Esophagus muscularis mucosa (tissue), 4 donors: ENCODE measurements at regions of chr1 and their contacts with region 1.

Region 1: DNA sequence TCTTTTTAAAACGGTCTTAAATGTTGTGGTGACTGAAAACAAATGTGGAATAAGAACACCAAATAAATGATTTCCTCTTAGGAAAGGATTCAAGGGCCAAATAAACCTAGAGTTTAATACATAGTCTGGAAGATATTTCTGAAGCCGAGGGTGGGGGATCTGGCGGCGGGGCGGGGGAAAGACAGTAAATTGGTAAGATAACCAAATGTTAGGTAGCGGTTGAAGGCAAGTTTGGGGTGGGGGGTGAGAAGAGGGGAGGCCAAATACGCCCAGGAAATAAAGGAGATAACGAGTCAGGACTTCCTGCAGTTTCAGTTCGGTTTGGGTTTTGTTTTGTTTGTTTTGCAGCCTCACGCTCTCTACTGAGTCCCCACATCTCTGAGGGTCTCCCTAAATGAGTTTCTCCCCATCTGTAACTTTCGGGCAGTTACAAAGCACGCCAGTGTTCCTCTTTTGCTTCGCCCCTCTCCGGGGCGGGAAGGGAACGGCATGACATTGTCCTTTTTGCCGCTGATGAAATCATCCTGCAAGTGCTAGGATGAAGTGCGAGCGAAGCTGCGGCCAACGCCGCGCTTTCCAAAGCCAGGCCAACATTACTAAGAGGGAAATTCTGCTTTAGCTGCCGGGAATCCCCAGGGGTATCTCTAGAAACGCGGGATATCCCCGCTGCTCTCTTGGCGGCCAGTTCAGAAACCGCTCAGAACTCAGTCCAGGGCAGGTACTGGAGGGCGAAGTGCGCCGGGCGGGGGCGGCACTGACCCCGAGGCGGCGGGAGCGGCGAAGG is 844 bp downstream of the NIBAN1 start:
- DNase-seq: no peak
- H3K4me3 ChIP-seq: peak overlapping the region; percentile 73 to 97 (median 93)
- H3K27ac ChIP-seq: peak overlapping the region; percentile 89 to 96 (median 95)
- H3K4me1 ChIP-seq: peaks cover 13 to 44% (median 44%) of the 10 kb centered on the region in 4 donors
- H3K27me3 ChIP-seq: no peaks in the 10 kb centered on the region
- CTCF ChIP-seq: no peak
- EP300 ChIP-seq: no peak
- POLR2A ChIP-seq: no peak

Region 2: DNA sequence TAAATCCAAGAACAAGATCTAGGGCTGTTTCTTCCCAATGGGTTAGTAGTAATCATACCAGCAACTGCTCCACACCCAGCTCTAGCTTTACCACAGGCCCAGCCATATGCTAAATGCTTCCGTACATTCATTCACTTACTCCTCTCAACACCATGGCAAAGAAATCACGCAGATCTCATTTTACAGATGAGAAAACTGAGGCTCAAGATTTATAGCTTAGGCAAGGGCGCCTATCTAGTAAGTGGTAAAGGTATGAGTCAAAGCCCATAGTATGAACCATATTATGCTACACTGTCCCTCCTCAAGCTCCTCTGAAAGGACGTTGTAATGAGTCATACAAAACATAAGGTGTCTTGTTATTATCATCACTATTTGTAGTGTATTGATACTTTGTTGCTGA is 81.3 kb before region 1 on chr1:
- intact Hi-C with region 1: loop called (anchors 5 kb)
- DNase-seq: no peak
- H3K4me3 ChIP-seq: no peak overlapping the region
- H3K27ac ChIP-seq: peak overlapping the region; percentile 75 to 89 (median 80)
- H3K4me1 ChIP-seq: peaks cover 43 to 62% (median 55%) of the 10 kb centered on the region in 4 donors
- H3K27me3 ChIP-seq: no peaks in the 10 kb centered on the region
- CTCF ChIP-seq: no peak
- EP300 ChIP-seq: no peak
- POLR2A ChIP-seq: no peak